Transverse colon (tissue), 4 donors: ENCODE measurements at regions of chr11 and their contacts with region 1.

Region 1: DNA sequence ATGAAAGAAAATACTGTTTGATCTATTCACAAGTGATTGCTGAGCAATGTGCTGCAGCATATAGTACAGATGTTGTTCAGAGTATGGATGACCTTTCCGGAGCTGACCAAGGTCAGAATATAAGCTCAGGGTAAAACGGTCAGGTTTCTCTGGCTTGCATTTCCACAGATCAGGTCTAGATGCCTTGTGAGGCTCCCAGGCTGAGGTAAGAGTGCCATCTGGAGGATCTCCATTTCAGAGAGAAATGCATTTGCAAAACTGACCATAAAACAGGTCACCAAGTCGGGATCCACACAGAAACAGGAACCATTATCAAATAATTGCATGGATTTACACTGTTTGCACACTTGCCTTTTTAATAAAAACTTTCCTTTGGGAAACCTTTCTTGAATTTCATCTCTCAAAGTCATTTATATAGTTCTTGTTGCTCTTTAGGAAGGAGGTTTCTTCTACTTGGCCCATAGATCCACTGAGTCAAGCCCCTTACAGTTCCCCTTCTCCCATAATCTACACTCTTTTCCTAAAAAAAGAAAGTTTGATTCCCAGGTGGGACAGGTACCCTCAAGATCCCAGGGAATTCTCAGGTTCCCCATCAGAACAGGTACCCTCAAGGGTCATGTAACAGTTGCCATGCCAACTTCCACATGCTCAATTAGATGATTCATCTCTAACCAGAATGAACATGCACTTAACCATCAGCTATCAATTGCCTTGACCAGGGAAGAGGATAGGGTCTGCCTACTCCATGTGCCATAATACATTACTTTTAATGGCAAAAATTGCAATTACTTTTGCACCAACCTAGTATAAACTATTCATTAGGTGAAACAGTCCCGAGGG is 25.0 kb upstream of the TMPRSS5 start:
- DNase-seq: peak; percentile 37
- H3K4me3 ChIP-seq: no peak overlapping the region
- H3K27ac ChIP-seq: no peak overlapping the region
- H3K4me1 ChIP-seq: peaks cover 0 to 7% (median 0%) of the 10 kb centered on the region in 4 donors
- H3K27me3 ChIP-seq: no peaks in the 10 kb centered on the region
- CTCF ChIP-seq: peak; percentile 37 to 55 (median 51)
- EP300 ChIP-seq: no peak
- POLR2A ChIP-seq: no peak

Region 2: DNA sequence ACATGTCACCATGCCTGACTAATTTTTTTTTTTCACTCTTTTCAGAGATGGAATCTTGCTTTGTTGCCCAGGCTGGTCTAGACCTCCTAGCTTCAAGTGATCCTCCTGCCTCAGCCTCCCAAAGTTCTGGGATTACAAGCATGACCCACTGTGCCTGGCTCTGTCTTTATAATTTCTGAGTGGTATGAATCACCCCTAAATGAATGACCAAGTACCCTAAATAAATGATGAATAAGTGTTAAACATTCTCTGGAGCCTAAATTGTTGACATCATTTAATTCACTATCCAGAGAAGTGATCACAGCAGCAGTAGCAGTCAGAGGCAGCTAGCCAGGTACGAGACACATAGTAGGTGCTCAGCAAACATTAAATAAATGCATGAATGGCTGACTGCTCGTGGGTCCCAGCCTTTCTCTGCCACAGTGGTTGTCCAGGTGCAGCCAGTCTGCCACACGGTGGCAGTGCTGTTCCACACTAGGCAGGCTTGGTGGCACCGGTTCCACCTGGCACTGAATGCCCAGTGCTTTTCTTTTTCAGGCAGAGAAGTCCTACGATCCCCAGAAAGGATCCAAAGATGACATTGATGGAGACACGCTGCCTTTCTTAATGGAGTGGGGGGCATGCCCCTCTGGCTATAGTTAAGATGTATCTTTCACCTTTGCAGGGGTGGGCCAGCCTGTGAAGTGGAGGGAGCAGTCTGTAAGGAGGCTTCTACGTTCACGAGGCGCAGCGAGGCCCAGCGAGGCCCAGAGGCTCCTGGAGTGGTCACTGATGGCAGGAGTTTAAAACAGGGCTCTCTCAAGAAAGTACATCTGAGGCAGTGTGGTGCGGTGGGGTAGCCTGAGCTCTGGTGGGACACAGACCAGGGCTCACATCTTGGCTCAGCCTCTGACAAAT is 425.4 kb before region 1 on chr11:
- in situ Hi-C with region 1: loop called in 3 of 4 experiments (anchors 10 to 25 kb)
- intact Hi-C with region 1: loop called (anchors 10 kb)
- DNase-seq: peak; percentile 77
- H3K4me3 ChIP-seq: no peak overlapping the region
- H3K27ac ChIP-seq: no peak overlapping the region
- H3K4me1 ChIP-seq: no peaks in the 10 kb centered on the region
- H3K27me3 ChIP-seq: no peaks in the 10 kb centered on the region
- CTCF ChIP-seq: peak; percentile 80 to 88 (median 88)
- EP300 ChIP-seq: no peak
- POLR2A ChIP-seq: no peak

Region 3: DNA sequence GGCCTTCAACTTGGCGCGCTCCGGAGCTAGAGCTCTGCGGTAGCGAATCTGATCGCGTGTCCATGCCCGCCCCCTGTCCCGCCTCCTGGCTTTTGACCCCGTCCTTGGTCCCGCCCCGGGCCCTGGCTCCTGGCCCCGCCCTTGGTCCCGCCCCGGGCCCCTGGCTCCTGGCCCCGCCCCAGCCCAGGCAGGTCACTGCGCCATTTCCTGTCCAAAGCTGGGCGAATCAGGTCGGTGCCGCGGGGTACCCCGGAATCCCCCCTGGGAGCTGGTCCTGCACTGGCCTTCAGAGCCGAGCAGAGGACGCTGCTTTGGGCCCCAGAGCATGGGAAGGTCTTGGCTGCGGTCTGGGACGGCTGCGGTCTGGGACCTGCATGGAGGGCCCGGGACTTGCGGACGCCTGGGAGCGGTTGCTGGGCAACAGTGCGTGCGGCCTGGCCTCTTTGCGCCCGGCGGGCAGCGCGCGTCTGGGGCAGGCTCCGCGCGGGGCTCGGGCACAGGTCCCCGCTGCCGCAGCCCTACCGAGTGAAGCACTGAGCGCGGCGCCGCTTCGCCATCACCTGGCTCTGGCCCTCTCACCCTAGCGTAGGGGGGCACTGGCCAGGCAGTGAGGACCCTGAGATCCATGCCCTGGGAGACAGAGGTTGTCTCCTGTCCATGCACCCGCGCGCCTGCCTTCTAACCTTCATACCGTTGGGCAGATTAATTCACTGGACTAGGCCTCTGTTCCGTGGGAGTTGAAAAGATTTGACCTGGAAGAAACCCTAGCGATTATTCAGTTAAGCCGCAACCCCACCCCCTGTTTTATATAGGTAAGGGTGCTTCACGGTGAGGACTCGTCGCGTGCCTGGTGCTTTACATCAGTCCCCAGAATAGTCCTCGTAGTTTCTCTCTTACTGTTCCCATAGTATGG is 416.5 kb before region 1 on chr11 and contains the start of gene TTC12:
- in situ Hi-C with region 1: loop called in 3 of 4 experiments (anchors 10 to 25 kb)
- intact Hi-C with region 1: loop called (anchors 10 kb)
- DNase-seq: peak; percentile 97
- H3K4me3 ChIP-seq: peak within 1 kb of the TSS; percentile 30 to 82 (median 70)
- H3K27ac ChIP-seq: peak within 1 kb of the TSS; percentile 86 to 94 (median 92)
- H3K4me1 ChIP-seq: peaks cover 0 to 16% (median 6%) of the 10 kb centered on the region in 4 donors
- H3K27me3 ChIP-seq: no peaks in the 10 kb centered on the region
- CTCF ChIP-seq: no peak
- EP300 ChIP-seq: no peak
- POLR2A ChIP-seq: peak; percentile 41
- total RNA-seq, gene TTC12: 10.3 to 24.1 (median 16.0) TPM

Region 4: DNA sequence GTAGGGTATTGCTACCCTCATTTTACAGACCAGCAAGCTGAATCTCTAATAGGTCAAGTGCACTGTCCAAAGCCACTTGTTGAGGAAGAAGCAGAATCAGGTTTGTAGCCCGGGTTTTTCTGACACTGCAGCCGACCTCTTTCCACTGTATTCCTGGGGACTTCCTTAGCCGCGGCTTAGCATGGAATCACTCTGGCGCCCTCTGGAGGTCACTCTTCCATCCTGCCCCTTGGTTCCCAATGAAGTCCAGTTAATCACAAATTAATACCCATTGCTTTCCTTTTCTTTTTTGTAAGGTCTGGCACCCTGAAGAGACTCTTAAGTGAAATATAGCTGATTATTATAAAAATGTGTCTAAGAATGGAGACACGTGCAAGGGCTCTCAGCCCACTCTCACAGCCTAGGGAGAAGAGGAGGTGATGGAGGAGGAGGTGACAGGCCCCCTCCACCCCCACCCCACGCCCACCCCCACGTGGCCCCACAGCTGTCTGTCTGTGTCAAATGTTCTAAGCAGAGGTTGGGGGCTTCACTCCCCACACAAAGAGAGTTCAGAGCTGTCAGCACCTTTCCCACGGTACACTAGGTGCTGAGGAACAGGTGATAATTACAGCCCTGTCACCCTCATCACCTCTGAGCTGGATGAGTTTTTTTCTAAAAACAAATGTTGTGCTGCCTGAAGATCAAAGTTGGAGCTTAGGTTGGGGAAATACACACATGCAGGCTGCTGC is 198.2 kb before region 1 on chr11:
- in situ Hi-C with region 1: loop called in 1 of 4 experiments (anchors 25 kb)
- intact Hi-C with region 1: no loop called
- DNase-seq: peak; percentile 77
- H3K4me3 ChIP-seq: no peak overlapping the region
- H3K27ac ChIP-seq: no peak overlapping the region
- H3K4me1 ChIP-seq: peaks cover 0 to 6% (median 0%) of the 10 kb centered on the region in 4 donors
- H3K27me3 ChIP-seq: no peaks in the 10 kb centered on the region
- CTCF ChIP-seq: peak; percentile 65 to 86 (median 81)
- EP300 ChIP-seq: no peak
- POLR2A ChIP-seq: no peak

Region 5: GRCh38 chr11:115067900-115068530 is 1336.9 kb after region 1 on chr11:
- in situ Hi-C with region 1: no loop called
- intact Hi-C with region 1: loop called (anchors 5 kb)
- DNase-seq: no peak
- H3K4me3 ChIP-seq: no peak overlapping the region
- H3K27ac ChIP-seq: no peak overlapping the region
- H3K4me1 ChIP-seq: no peaks in the 10 kb centered on the region
- H3K27me3 ChIP-seq: no peaks in the 10 kb centered on the region
- CTCF ChIP-seq: no peak
- EP300 ChIP-seq: no peak
- POLR2A ChIP-seq: no peak